Mammary epithelial cell (primary cell): ENCODE measurements at regions of chr10 and their contacts with region 1.

Region 1: DNA sequence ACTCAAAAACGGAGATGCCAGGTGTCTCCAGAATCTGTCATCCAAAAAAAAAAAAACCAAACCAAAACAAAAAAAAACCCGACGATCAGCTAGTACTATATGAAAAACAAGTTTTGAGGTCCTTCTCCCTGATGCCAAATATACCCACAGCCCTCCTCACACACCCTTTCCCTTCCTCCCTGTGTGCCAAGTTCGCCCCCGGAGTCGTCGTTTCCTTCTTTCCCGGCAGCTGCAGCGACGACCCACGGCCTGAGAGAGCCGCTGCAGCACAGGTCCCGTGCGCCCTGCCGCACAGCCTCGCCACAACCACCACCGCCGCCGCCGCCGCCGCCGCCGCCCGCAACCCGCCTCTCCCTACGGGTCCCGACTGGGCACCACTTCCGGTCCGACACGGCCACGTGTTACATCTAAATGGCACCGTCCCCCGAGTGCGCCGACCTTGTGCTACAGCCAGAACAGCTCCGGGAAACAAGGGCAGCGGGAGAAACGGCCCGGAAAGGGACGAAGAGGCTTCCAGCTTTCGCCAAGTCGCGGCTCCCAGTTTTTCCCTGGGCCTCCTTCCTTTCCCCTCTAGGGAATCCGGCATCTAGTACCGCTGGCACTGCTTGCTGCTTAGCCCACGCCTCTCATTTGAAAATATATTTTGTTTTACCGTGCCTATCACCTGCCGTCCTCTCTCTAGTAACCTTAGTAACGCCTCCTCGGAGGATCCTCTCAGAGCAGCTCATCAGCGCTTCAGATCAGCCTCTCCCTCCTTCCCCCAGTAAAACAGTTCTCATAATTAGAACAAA is at the start of gene FRA10AC1:
- DNase-seq: peak; percentile 88
- H3K4me3 ChIP-seq: peak within 1 kb of the TSS; percentile 74 to 79 (median 77)
- H3K27ac ChIP-seq: peak within 1 kb of the TSS; percentile 62
- H3K4me1 ChIP-seq: peaks cover 17% of the 10 kb centered on the region
- H3K27me3 ChIP-seq: no peaks in the 10 kb centered on the region
- CTCF ChIP-seq: peak; percentile 37 to 56
- total RNA-seq, gene FRA10AC1: 10.8 to 15.9 TPM

Region 2: DNA sequence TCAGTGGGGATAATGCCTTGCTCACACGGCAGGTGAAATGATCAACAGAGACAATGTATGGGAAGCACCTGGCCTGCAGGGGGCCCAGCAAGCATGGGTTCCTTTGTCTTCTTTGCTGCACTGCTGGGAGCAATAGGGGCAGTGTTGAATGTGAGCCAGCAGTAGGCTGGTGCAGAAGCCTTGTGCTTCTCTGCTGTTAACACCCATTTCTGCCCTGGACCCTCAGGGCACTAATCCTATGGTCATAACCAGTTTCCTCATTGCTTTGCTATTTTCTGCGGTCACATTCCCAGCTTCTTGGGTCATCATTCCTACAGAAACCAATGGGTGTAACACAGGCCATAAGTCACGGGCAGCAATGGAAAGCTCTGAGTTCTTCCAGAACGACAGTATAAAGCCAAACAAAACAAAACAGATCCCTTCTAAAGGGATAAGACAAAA is 44.5 kb after region 1 on chr10:
- CTCF ChIA-PET with region 1: no interaction called
- dilution Hi-C with region 1: no loop called
- in situ Hi-C with region 1: no loop called
- intact Hi-C with region 1: loop called (anchors 2 kb)
- DNase-seq: peak; percentile 97
- H3K4me3 ChIP-seq: no peak overlapping the region
- H3K27ac ChIP-seq: peak overlapping the region; percentile 39
- H3K4me1 ChIP-seq: peaks cover 3% of the 10 kb centered on the region
- H3K27me3 ChIP-seq: no peaks in the 10 kb centered on the region
- CTCF ChIP-seq: peak; percentile 47 to 57

Region 3: DNA sequence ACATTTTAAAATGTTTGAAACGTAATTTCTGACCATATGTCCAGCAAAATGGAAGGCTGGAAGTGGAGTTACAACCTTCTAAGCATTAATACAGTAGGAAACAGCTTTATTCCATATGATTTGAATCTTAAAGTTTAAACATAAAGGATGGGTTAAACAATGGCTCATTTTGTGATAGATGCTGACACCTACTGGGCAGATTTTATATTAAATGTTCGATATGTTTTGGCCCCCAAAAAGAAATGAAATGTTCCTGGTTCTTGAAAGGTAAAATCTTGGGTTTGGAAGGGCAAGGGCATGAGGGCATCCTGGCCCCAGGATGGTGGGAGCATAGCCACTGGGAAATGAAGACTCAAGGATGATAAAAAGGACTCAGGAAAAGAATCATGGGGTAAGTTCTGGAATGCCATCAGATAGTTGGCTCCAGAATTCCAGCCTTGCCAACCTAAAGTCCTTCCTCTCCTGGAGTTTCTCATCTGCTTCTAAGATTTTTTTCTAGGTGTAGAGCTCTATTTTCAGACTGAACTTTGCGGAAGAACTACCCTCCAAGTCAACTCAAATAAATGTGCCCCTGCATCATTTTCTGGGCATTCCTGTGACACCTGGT is 156.7 kb after region 1 on chr10:
- CTCF ChIA-PET with region 1: no interaction called
- dilution Hi-C with region 1: no loop called
- in situ Hi-C with region 1: no loop called
- intact Hi-C with region 1: loop called (anchors 1 kb)
- DNase-seq: no peak
- H3K4me3 ChIP-seq: no peak overlapping the region
- H3K27ac ChIP-seq: no peak overlapping the region
- H3K4me1 ChIP-seq: no peaks in the 10 kb centered on the region
- H3K27me3 ChIP-seq: peaks cover 3% of the 10 kb centered on the region
- CTCF ChIP-seq: peak; percentile 22 to 40

Region 4: DNA sequence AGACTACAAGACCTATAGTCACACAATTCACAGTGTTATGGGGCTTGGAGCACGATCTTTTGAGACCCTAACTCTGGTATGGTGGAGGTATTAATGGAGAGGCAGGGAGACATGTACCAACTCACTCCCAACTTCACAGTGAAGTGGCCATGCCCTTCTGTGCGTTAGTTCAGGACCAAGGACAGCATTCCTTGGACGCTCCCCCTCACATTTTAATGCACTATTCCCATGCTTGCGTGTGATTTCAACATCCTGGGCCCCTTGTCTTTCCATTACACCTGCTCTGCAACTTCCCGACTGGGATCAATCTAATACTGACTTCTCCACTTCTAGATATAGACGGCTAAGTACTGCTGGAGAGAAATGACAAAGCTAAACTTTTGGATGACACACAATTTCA is 364.0 kb after region 1 on chr10:
- CTCF ChIA-PET with region 1: no interaction called
- dilution Hi-C with region 1: no loop called
- in situ Hi-C with region 1: no loop called
- intact Hi-C with region 1: loop called (anchors 5 kb)
- DNase-seq: peak; percentile 5
- H3K4me3 ChIP-seq: no peak overlapping the region
- H3K27ac ChIP-seq: no peak overlapping the region
- H3K4me1 ChIP-seq: no peaks in the 10 kb centered on the region
- H3K27me3 ChIP-seq: no peaks in the 10 kb centered on the region
- CTCF ChIP-seq: no peak

Region 5: GRCh38 chr10:94320285-94320914 is 618.0 kb after region 1 on chr10:
- CTCF ChIA-PET with region 1: no interaction called
- dilution Hi-C with region 1: no loop called
- in situ Hi-C with region 1: no loop called
- intact Hi-C with region 1: loop called (anchors 10 kb)
- DNase-seq: peak; percentile 37
- H3K4me3 ChIP-seq: no peak overlapping the region
- H3K27ac ChIP-seq: no peak overlapping the region
- H3K4me1 ChIP-seq: no peaks in the 10 kb centered on the region
- H3K27me3 ChIP-seq: no peaks in the 10 kb centered on the region
- CTCF ChIP-seq: peak; percentile 73 to 79

Region 6: GRCh38 chr10:94402015-94402842 is 699.8 kb after region 1 on chr10 and contains the start of gene TBC1D12:
- CTCF ChIA-PET with region 1: no interaction called
- dilution Hi-C with region 1: no loop called
- in situ Hi-C with region 1: no loop called
- intact Hi-C with region 1: loop called (anchors 2 kb)
- DNase-seq: peak; percentile 95
- H3K4me3 ChIP-seq: peak within 1 kb of the TSS; percentile 86 to 92 (median 90)
- H3K27ac ChIP-seq: peak within 1 kb of the TSS; percentile 74
- H3K4me1 ChIP-seq: peaks cover 10% of the 10 kb centered on the region
- H3K27me3 ChIP-seq: no peaks in the 10 kb centered on the region
- CTCF ChIP-seq: no peak
- total RNA-seq, gene TBC1D12: 7.4 to 15.7 TPM